ENCODE measurements at regions of chr2 and their contacts with region 1.

Region 1: DNA sequence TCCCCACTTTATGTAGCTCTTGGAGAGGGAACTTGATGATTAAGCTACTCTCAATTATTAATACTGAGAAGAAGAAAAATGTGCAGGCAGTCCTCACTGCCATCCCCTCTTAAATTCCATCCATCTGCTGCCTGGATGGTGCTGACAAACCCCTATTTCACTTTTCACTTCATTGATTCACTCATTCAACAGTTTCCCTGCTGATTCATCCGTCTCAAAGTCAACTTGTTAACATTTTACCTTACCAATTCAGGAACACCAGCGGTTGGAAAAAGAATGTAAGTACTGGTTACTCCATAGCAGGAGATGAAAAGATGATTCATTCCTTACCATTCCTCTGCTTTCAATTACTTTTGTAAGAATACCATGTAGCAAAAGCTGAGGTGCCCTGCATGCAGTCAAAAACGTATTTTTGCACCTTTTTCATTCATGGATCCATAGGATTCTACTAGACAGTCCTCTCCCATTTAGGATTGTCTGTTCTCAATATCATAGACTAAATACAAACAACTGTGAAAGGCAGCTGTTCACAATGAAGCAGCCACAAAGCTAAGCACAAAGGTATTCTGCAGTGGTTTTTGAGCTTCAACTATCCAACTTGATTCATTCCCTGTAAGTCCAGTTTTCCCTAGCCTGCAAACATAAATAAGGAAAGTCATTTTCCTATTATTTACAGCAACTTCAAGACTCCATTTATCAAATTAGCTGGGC is 262.0 kb downstream of the MREG start:
- DNase-seq: peak; percentile 94
- ATAC-seq: peak; percentile 56
- H3K4me3 ChIP-seq: no peak overlapping the region
- H3K27ac ChIP-seq: peak overlapping the region; percentile 81
- H3K4me1 ChIP-seq: peaks cover 54% of the 10 kb centered on the region
- H3K27me3 ChIP-seq: no peaks in the 10 kb centered on the region
- CTCF ChIP-seq: no peak

Region 2: DNA sequence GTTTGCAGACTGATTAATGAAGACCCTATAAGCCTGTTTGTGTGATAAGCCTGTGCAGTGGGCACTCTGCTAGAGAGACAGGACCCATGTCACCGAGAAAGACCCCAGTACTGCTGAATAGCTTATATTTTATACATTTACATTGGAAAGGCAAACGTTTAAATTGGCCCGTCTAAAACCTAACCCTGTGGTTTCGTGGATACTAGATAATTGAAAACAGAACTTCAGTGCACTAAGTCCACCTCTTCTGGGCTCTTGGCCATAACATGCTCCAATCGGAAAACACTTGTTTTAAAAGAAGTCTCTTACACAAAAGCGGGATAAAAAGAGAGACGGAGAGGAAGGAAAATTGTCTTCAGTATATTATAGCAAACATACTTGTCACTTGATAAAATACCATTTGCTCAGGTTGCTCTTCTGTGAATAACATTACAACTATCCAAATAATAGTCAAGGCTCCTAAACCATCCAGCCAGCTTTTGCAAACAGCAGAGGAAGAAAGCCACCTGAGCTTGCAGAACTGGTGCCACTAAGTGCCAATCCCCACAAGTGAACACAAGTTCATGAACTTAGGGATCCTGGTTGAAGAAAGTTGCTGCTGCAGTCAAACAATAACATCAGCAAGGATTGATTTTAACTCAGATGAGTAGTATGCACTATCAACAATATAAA is 97.1 kb before region 1 on chr2:
- CTCF ChIA-PET with region 1: no interaction called
- POLR2A ChIA-PET with region 1: no interaction called
- intact Hi-C with region 1: no loop called
- DNase-seq: no peak
- ATAC-seq: no peak
- H3K4me3 ChIP-seq: no peak overlapping the region
- H3K27ac ChIP-seq: no peak overlapping the region
- H3K4me1 ChIP-seq: peaks cover 14% of the 10 kb centered on the region
- H3K27me3 ChIP-seq: no peaks in the 10 kb centered on the region
- CTCF ChIP-seq: no peak

Region 3: GRCh38 chr2:215705771-215706361 is 45.5 kb before region 1 on chr2:
- CTCF ChIA-PET with region 1: no interaction called
- POLR2A ChIA-PET with region 1: no interaction called
- intact Hi-C with region 1: loop called (anchors 2 kb)
- DNase-seq: peak; percentile 71
- ATAC-seq: peak; percentile 80
- H3K4me3 ChIP-seq: no peak overlapping the region; the same call in 1 of the 2 replicates
- H3K27ac ChIP-seq: peak overlapping the region; percentile 84
- H3K4me1 ChIP-seq: peaks cover 47% of the 10 kb centered on the region
- H3K27me3 ChIP-seq: no peaks in the 10 kb centered on the region
- CTCF ChIP-seq: no peak

Region 4: GRCh38 chr2:215728504-215729087 is 22.8 kb before region 1 on chr2:
- CTCF ChIA-PET with region 1: no interaction called
- POLR2A ChIA-PET with region 1: no interaction called
- intact Hi-C with region 1: loop called (anchors 1 kb)
- DNase-seq: peak; percentile 91
- ATAC-seq: peak; percentile 91
- H3K4me3 ChIP-seq: no peak overlapping the region
- H3K27ac ChIP-seq: peak overlapping the region; percentile 95
- H3K4me1 ChIP-seq: peaks cover 32% of the 10 kb centered on the region
- H3K27me3 ChIP-seq: no peaks in the 10 kb centered on the region
- CTCF ChIP-seq: no peak

Measured in PC-3 (cell line).